HepG2 (cell line): ENCODE measurements at regions of chr15 and their contacts with region 1.

Region 1: GRCh38 chr15:80776420-80777045 is 2.6 kb upstream of the CEMIP start:
- DNase-seq: peak; percentile 62
- ATAC-seq: no peak
- H3K4me3 ChIP-seq: no peak overlapping the region
- H3K27ac ChIP-seq: no peak overlapping the region
- H3K4me1 ChIP-seq: peaks cover 26% of the 10 kb centered on the region
- H3K27me3 ChIP-seq: peaks cover 2 to 4% of the 10 kb centered on the region in 2 experiments; a peak in 2 of 5 replicates
- CTCF ChIP-seq: peak; percentile 90
- EP300 ChIP-seq: no peak
- POLR2A ChIP-seq: no peak
- RAD21 ChIP-seq: peak; percentile 49; the same call in 1 of the 2 replicates

Region 2: GRCh38 chr15:80455668-80456442 is 320.7 kb before region 1 on chr15:
- CTCF ChIA-PET with region 1: interaction called, 11 read pairs
- POLR2A ChIA-PET with region 1: no interaction called
- in situ Hi-C with region 1: loop called (anchors 5 kb)
- intact Hi-C with region 1: loop called (anchors 1 kb)
- DNase-seq: peak; percentile 44
- ATAC-seq: peak; percentile 68
- H3K4me3 ChIP-seq: no peak overlapping the region
- H3K27ac ChIP-seq: no peak overlapping the region
- H3K4me1 ChIP-seq: peaks cover 46% of the 10 kb centered on the region
- H3K27me3 ChIP-seq: no peaks in the 10 kb centered on the region
- CTCF ChIP-seq: peak; percentile 91
- EP300 ChIP-seq: no peak
- POLR2A ChIP-seq: no peak
- RAD21 ChIP-seq: peak; percentile 80

Region 3: DNA sequence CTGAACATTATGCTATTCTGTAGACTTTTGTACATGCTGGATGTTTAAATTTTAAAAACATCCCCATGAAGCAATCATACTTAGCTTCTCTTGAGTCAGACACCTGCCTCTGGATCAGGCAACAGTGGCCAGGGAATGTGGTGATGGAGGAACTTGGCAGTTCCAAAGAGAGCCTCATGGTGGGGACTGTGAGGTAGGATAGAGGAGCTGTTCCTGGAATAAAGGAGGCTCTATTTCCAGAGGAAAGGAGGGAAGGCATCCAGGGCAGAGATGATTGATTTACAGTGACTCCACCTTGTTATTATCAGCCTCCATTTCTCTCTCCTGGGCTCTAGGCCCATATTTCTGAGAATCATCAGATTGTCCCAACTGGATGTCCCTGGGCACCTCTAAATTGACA is 116.4 kb before region 1 on chr15:
- CTCF ChIA-PET with region 1: interaction called, 17 read pairs
- POLR2A ChIA-PET with region 1: interaction called, 6 read pairs
- in situ Hi-C with region 1: loop called (anchors 5 kb)
- intact Hi-C with region 1: loop called (anchors 1 kb)
- DNase-seq: peak; percentile 42
- ATAC-seq: peak; percentile 96
- H3K4me3 ChIP-seq: no peak overlapping the region
- H3K27ac ChIP-seq: no peak overlapping the region
- H3K4me1 ChIP-seq: no peaks in the 10 kb centered on the region
- H3K27me3 ChIP-seq: no peaks in the 10 kb centered on the region
- CTCF ChIP-seq: peak; percentile 77
- EP300 ChIP-seq: no peak
- POLR2A ChIP-seq: no peak
- RAD21 ChIP-seq: 0 out of 2 replicates have a peak, but pooled peaks have one; percentile 40

Region 4: GRCh38 chr15:80844011-80844755 is 67.7 kb after region 1 on chr15:
- CTCF ChIA-PET with region 1: no interaction called
- POLR2A ChIA-PET with region 1: interaction called, 22 read pairs
- in situ Hi-C with region 1: no loop called
- intact Hi-C with region 1: no loop called
- DNase-seq: peak; percentile 45
- ATAC-seq: peak; percentile 8; the same call in 1 of the 3 replicates
- H3K4me3 ChIP-seq: no peak overlapping the region
- H3K27ac ChIP-seq: no peak overlapping the region
- H3K4me1 ChIP-seq: peaks cover 83% of the 10 kb centered on the region
- H3K27me3 ChIP-seq: no peaks in the 10 kb centered on the region
- CTCF ChIP-seq: no peak
- EP300 ChIP-seq: no peak
- POLR2A ChIP-seq: no peak
- RAD21 ChIP-seq: no peak

Region 5: DNA sequence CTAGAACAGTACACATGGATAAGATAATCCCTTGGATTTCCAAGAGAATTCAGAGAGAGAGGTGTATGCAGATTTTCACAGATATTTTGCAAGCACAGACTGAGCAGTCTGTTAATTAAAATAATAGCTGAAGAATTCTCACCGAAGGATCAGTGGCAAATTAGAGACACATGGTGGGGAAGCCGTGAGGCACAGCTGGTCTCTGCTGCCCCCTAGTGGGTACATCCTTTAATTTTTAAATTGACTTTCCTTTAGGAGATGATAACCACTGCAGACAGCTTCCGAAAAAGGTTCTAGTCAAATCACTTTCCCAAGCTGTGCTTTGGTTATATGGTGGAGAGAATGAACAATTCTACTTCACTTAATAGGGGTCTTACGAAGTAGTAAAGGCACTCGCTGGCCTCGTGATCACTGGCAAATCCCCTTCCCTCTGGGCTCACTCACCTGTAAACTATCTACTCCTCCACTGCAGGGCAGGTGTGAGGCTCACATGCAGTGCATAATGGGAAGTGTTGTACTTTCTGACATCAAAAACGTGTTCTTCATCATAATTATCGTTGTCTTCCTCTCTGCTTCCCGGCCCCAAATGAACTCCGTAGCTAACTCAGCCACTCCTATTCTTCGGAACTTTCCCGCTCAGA is 193.6 kb after region 1 on chr15:
- CTCF ChIA-PET with region 1: interaction called, 28 read pairs
- POLR2A ChIA-PET with region 1: interaction called, 5 read pairs
- in situ Hi-C with region 1: loop called (anchors 5 kb)
- intact Hi-C with region 1: loop called (anchors 1 kb)
- DNase-seq: peak; percentile 35
- ATAC-seq: peak; percentile 76
- H3K4me3 ChIP-seq: no peak overlapping the region
- H3K27ac ChIP-seq: no peak overlapping the region
- H3K4me1 ChIP-seq: no peaks in the 10 kb centered on the region
- H3K27me3 ChIP-seq: no peaks in the 10 kb centered on the region
- CTCF ChIP-seq: peak; percentile 81
- EP300 ChIP-seq: no peak
- POLR2A ChIP-seq: no peak
- RAD21 ChIP-seq: peak; percentile 71